Right cardiac atrium (tissue), 5 donors: ENCODE measurements at regions of chr9 and their contacts with region 1.

Region 1: GRCh38 chr9:127828262-127829031 is 25.8 kb downstream of the FPGS start:
- DNase-seq: peak; percentile 95 to 96 (median 96)
- ATAC-seq: peak; percentile 87 to 89
- H3K4me3 ChIP-seq: no peak overlapping the region
- H3K27ac ChIP-seq: peak overlapping the region; percentile 85
- H3K4me1 ChIP-seq: peaks cover 22% of the 10 kb centered on the region
- H3K27me3 ChIP-seq: no peaks in the 10 kb centered on the region

Region 2: GRCh38 chr9:126397056-126397455 is 1431.4 kb before region 1 on chr9:
- intact Hi-C with region 1: no loop called
- DNase-seq: no peak
- ATAC-seq: no peak
- H3K4me3 ChIP-seq: no peak overlapping the region
- H3K27ac ChIP-seq: no peak overlapping the region
- H3K4me1 ChIP-seq: peaks cover 7% of the 10 kb centered on the region
- H3K27me3 ChIP-seq: no peaks in the 10 kb centered on the region

Region 3: DNA sequence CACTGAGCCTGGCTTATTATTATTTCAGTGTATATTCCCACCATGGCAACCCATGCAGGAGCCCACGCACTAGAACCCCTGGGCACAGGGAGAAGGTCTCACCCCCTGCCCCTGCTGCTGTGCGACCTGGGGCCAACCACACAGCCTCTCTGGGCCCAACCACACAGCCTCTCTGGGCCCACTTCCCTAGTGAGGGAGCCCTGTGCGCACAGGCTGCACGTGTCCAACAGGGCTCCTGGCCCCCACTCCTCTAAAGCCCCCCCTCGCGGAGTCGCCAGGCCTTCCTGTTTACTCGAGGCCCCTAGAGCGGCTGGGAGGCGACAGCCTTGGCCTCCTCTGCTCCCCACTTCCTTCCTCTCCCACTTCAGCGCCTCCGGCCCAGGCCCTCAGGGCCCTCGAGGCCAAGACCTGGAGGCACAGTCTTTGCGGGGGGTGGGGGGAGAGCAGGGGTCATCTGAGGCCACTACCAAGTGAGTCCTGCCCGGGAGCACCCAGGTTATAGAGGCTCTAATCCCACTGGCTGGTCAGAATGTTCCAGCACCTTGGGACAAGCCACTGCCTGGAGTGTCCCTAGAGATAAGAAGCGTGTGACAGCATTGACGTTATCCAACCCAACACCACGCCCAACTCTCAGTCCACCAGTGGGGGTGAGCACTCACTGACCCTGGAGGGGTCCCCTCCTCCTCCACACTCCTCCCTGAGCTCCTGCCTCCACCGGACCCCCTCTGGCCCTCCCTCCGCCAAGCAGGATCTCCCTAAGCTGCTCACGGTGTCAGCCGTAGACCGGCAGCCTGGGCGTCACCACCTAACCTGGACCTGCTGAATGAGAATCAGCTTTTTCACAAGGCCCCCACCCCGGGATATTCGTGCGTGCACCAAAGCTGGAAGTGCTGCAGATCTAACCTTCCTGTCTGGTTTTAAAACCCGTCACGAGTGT is 33.9 kb after region 1 on chr9:
- intact Hi-C with region 1: loop called in 1 of 4 experiments (anchors 5 kb)
- DNase-seq: peak; percentile 90 to 97 (median 95)
- ATAC-seq: peak; percentile 71 to 72
- H3K4me3 ChIP-seq: no peak overlapping the region
- H3K27ac ChIP-seq: peak overlapping the region; percentile 97
- H3K4me1 ChIP-seq: peaks cover 30% of the 10 kb centered on the region
- H3K27me3 ChIP-seq: no peaks in the 10 kb centered on the region